ENCODE measurements at regions of chr10 and their contacts with region 1.

Region 1: DNA sequence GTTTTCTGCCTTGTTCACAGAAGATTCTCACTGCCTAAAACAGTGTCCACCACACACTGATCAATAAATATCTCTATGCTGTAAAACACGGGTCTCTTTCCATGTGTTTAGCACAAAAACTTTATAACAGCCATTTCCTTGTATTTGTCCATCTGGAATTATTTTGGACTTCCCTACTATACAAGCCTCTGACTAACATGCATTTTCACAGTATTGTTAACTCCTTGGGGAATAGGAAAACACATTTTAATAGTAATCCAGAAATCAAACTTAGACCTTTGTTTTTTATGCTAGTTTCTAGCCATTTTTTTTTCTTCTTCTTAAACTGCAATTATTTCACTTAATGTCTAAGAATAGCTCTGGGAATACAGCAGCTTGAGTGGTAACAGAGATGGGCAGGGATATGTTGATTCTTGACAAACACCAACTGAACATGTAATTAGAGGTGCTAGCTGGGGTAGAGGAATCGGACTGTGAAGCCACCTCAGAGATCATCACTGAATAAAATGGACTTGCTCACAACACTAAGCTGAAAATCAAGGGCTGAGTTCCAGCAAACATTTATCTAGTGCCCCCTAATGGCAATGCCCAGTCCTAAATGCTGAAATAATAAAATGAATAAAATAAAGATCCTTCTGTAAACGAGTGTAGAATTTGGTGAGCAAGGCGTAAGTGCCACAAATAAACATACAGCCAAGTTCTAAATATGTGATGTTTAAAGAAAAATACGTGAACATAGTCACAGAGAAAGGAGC is 593.1 kb downstream of the SORCS1 start:
- DNase-seq: no peak
- ATAC-seq: peak in 2 of 8 donors; percentile 39 to 45
- H3K4me3 ChIP-seq: no peak overlapping the region
- H3K27ac ChIP-seq: no peak overlapping the region
- H3K4me1 ChIP-seq: peaks cover 0 to 6% (median 0%) of the 10 kb centered on the region in 9 donors
- H3K27me3 ChIP-seq: no peaks in the 10 kb centered on the region
- CTCF ChIP-seq: peak in 8 of 9 donors; percentile 24 to 61 (median 50)

Region 2: DNA sequence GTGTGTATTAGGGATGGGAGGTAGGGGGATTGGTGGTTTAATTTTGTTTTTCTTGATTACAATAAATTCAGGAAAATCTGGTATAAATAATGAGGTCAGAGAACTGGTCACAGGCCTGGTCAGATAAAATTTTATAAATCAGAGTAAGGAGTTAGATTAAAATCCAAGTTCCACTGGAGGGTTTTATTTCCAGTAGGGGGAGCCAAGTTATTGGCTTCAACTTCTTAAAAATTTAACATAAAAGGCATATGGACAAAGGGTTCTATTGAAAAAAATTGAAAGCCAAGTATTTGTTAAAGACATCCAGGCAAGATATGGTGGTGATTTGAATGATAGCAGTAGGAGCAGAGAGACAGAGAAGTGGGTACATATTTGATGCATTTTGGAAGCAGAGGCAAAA is 170.2 kb before region 1 on chr10:
- intact Hi-C with region 1: loop called in 1 of 10 experiments (anchors 10 kb)
- DNase-seq: no peak
- ATAC-seq: no peak
- H3K4me3 ChIP-seq: no peak overlapping the region
- H3K27ac ChIP-seq: no peak overlapping the region
- H3K4me1 ChIP-seq: peaks cover 0 to 4% (median 2%) of the 10 kb centered on the region in 9 donors
- H3K27me3 ChIP-seq: peaks cover 0 to 4% (median 0%) of the 10 kb centered on the region in 7 donors
- CTCF ChIP-seq: peak in 4 of 9 donors; percentile 12 to 23 (median 18)

Measured in heart right ventricle (tissue), 16 donors.